ENCODE measurements at regions of chr17 and their contacts with region 1.

Region 1: GRCh38 chr17:29722411-29723198 is 99.9 kb upstream of the CORO6 start:
- DNase-seq: peak; percentile 96
- ATAC-seq: peak; percentile 86
- H3K4me3 ChIP-seq: peak overlapping the region; percentile 53; the same call in 1 of the 2 replicates
- H3K27ac ChIP-seq: peak overlapping the region; percentile 94
- H3K4me1 ChIP-seq: peaks cover 62% of the 10 kb centered on the region
- H3K27me3 ChIP-seq: no peaks in the 10 kb centered on the region
- CTCF ChIP-seq: no peak
- EP300 ChIP-seq: peak; percentile 33 to 67; a peak in 3 of 4 replicates
- POLR2A ChIP-seq: peak; percentile 65
- RAD21 ChIP-seq: no peak; the same call in 1 of the 2 replicates

Region 2: DNA sequence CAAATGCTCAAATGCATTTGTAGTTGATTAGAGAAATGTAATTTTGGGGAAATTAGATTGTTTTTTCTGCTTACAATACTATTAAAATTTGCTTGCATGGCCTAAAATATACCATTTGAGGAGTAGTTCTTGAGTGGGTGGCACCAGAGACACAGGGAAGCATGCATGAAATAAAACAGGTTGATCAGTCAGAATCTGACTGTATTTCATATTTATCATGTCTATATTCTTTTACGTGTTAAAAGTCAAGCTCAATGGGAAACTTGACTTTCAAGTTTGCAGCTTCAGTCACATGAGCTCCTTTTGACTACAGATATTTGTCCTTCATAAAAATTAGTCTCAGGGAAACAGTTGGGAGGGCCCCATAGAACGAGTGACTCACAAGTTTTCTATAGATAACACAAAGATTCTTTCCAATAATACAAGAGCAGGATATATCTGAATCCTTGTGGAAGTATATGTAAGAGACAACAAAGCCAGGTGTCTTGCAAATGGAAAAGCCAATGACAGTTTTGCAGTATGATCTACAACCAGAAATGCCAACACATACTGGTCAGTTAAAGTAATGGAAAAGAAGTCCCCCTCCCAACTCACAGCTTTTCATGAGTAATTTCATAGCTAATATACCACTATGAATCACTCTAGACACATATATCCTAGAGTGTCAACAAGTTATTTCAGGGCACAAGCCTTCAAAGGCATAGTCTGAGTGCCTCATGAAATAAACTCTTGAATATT is 57.7 kb before region 1 on chr17:
- CTCF ChIA-PET with region 1: no interaction called
- POLR2A ChIA-PET with region 1: interaction called, 7 read pairs
- RAD21 ChIA-PET with region 1: interaction called, 21 read pairs
- SMC1A ChIA-PET with region 1: interaction called, 12 read pairs
- in situ Hi-C with region 1: no loop called
- intact Hi-C with region 1: no loop called
- DNase-seq: no peak
- ATAC-seq: peak; percentile 60
- H3K4me3 ChIP-seq: no peak overlapping the region
- H3K27ac ChIP-seq: peak overlapping the region; percentile 4
- H3K4me1 ChIP-seq: peaks cover 8% of the 10 kb centered on the region
- H3K27me3 ChIP-seq: no peaks in the 10 kb centered on the region
- CTCF ChIP-seq: no peak
- EP300 ChIP-seq: no peak
- POLR2A ChIP-seq: no peak
- RAD21 ChIP-seq: no peak

Region 3: GRCh38 chr17:29699283-29699682 is 23.3 kb before region 1 on chr17:
- CTCF ChIA-PET with region 1: interaction called, 50 read pairs
- POLR2A ChIA-PET with region 1: interaction called, 87 read pairs
- RAD21 ChIA-PET with region 1: interaction called, 141 read pairs
- SMC1A ChIA-PET with region 1: interaction called, 224 read pairs
- in situ Hi-C with region 1: no loop called
- intact Hi-C with region 1: no loop called
- DNase-seq: no peak
- ATAC-seq: no peak
- H3K4me3 ChIP-seq: no peak overlapping the region
- H3K27ac ChIP-seq: no peak overlapping the region
- H3K4me1 ChIP-seq: peaks cover under 1% of the 10 kb centered on the region; the same call in 1 of the 2 replicates
- H3K27me3 ChIP-seq: no peaks in the 10 kb centered on the region
- CTCF ChIP-seq: no peak
- EP300 ChIP-seq: no peak
- POLR2A ChIP-seq: no peak
- RAD21 ChIP-seq: no peak

Region 4: DNA sequence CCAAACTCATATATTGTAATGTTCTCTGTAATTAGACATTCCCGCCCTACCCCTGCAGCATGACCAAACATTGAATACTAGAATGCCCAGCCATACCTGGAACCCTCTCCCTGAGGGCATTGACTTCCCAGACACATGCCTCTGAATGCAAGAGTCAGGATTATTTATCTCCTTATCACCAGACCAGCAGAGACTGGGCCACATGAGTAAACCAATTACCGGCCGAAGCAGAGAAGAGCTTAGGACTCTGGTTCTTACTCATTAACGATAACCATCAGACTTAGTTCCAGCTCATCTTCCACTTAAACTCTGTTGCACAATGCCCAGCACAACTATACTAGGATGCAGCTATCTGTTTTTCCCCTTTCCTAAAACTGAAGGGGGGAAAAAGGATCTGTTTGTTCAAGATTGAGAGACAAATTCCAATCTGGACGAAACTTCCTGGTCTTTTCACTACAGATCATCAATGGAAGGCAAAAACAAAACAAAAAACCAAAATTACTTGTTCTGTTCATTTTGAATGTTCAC is 11.7 kb before region 1 on chr17:
- CTCF ChIA-PET with region 1: interaction called, 50 read pairs
- POLR2A ChIA-PET with region 1: interaction called, 87 read pairs
- RAD21 ChIA-PET with region 1: interaction called, 141 read pairs
- SMC1A ChIA-PET with region 1: interaction called, 224 read pairs
- in situ Hi-C with region 1: no loop called
- intact Hi-C with region 1: loop called (anchors 1 kb)
- DNase-seq: no peak
- ATAC-seq: no peak
- H3K4me3 ChIP-seq: no peak overlapping the region
- H3K27ac ChIP-seq: no peak overlapping the region
- H3K4me1 ChIP-seq: peaks cover 32% of the 10 kb centered on the region
- H3K27me3 ChIP-seq: no peaks in the 10 kb centered on the region
- CTCF ChIP-seq: no peak
- EP300 ChIP-seq: no peak
- POLR2A ChIP-seq: no peak
- RAD21 ChIP-seq: no peak

Region 5: GRCh38 chr17:29747660-29748059 is 25.1 kb after region 1 on chr17:
- CTCF ChIA-PET with region 1: interaction called, 13 read pairs
- POLR2A ChIA-PET with region 1: interaction called, 14 read pairs
- RAD21 ChIA-PET with region 1: interaction called, 28 read pairs
- SMC1A ChIA-PET with region 1: interaction called, 297 read pairs
- in situ Hi-C with region 1: no loop called
- intact Hi-C with region 1: no loop called
- DNase-seq: no peak
- ATAC-seq: peak; percentile 36
- H3K4me3 ChIP-seq: no peak overlapping the region; the same call in 1 of the 2 replicates
- H3K27ac ChIP-seq: no peak overlapping the region
- H3K4me1 ChIP-seq: peaks cover 9% of the 10 kb centered on the region
- H3K27me3 ChIP-seq: no peaks in the 10 kb centered on the region
- CTCF ChIP-seq: no peak
- EP300 ChIP-seq: no peak
- POLR2A ChIP-seq: no peak
- RAD21 ChIP-seq: no peak

Region 6: DNA sequence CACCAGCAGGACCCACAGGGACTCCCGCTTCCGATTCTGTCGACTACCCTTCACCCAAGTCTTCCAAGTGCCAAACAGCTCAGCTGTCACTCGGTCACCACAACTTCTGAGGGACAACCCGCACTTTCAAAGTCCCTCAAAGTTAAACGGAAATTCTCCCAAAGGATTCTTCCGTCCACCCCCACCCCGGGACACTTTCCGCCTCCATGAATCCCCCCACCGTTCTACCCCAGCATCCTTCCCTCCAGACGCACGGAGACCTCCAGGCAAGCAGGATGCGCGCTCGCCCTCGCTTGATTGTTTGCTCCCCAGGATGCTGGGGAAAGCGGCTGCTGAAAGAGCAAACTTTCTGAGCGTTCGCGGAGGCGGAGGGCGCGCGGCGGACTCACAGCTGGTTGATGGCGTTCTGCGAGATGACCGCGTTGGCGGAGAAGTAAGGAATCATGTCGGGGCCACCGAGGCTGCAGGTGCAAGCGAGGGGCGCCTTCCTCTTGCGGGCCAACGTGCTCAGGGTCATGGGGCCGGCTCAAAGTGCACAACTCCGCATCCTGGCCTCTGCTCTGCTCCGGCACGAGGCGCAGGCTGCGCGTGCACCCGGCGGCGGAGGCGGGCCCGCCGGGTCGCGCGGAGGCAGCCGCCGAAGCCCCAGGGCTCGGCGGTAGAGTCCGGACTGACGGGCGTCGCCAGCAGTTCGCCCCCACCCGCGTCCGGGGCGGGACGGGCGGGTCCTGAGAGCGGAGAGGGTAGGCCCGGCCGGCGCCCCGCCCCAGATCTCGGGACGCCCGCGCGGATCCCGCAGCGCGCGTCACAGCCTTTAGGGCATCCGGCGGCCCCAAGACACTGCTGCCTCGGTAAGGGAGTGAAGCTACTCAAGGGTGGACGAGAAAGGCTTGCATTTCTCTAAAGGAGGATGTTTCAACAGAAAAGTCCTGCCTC is 38.4 kb after region 1 on chr17:
- CTCF ChIA-PET with region 1: interaction called, 39 read pairs
- POLR2A ChIA-PET with region 1: interaction called, 47 read pairs
- RAD21 ChIA-PET with region 1: interaction called, 144 read pairs
- SMC1A ChIA-PET with region 1: interaction called, 297 read pairs
- in situ Hi-C with region 1: no loop called
- intact Hi-C with region 1: loop called (anchors 2 kb)
- DNase-seq: peak; percentile 55
- ATAC-seq: peak; percentile 92
- H3K4me3 ChIP-seq: peak overlapping the region; percentile 88
- H3K27ac ChIP-seq: peak overlapping the region; percentile 90
- H3K4me1 ChIP-seq: peaks cover 11% of the 10 kb centered on the region; the same call in 1 of the 2 replicates
- H3K27me3 ChIP-seq: no peaks in the 10 kb centered on the region
- CTCF ChIP-seq: no peak
- EP300 ChIP-seq: 0 out of 4 replicates have a peak, but pooled peaks of 1 of the 2 experiments have one; percentile 4
- POLR2A ChIP-seq: peak; percentile 91
- RAD21 ChIP-seq: no peak

Region 7: DNA sequence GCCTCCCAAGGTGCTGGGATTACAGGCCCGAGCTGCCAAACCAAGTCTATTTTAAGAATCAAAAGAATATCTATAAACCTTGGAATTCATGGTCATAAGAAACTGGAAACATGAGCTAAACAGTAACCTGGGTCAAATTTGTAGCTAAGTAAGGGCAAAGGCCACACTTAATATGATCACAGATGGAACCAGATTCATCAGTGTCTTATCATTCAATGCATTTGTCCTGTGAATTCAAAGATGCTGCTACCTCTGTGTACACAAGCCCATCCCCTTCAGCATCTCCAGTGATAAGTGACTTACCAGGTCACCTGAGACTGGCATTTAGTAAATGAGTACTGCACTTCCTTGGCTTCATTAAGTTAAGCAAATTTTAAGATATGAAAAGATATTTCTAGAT is 99.3 kb after region 1 on chr17:
- CTCF ChIA-PET with region 1: no interaction called
- POLR2A ChIA-PET with region 1: no interaction called
- RAD21 ChIA-PET with region 1: no interaction called
- SMC1A ChIA-PET with region 1: no interaction called
- in situ Hi-C with region 1: no loop called
- intact Hi-C with region 1: no loop called
- DNase-seq: no peak
- ATAC-seq: no peak
- H3K4me3 ChIP-seq: no peak overlapping the region
- H3K27ac ChIP-seq: no peak overlapping the region
- H3K4me1 ChIP-seq: no peaks in the 10 kb centered on the region
- H3K27me3 ChIP-seq: no peaks in the 10 kb centered on the region
- CTCF ChIP-seq: no peak
- EP300 ChIP-seq: no peak
- POLR2A ChIP-seq: no peak
- RAD21 ChIP-seq: no peak